A673 (cell line): ENCODE measurements at regions of chr1 and their contacts with region 1.

Region 1: DNA sequence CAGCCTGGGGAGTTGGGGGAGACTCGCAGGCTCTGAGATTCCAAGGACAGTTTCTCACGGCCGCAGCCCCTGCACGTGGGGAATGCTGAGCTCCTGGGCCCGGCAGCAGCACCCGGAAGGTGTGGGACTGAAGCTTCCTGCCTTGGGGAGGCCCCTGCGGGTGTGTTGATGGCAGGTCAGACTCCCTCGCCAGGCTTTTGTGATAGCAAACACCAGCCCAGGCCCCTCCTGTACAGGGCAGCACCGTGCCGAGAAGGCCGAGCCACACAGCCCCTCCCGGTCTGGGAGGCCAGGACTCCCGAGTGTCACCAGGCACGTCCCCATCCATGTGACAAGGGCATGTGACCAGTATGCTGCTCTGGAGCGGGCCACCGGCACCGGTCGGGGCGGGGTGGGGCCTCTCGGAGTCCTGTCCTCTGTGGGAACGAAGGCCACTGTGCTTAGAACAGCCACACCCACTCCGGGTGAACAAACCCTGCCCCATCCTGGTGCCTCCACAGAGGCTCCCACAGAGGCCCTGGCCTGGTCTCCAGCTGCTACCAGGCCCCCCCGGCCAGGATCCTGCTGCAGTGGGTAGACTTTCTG is 31.1 kb upstream of the ARHGEF16 start:
- DNase-seq: no peak
- H3K4me3 ChIP-seq: no peak overlapping the region
- H3K27ac ChIP-seq: no peak overlapping the region
- H3K4me1 ChIP-seq: no peaks in the 10 kb centered on the region
- H3K27me3 ChIP-seq: peaks cover 20% of the 10 kb centered on the region
- CTCF ChIP-seq: no peak

Region 2: GRCh38 chr1:2414083-2414958 is 1009.0 kb before region 1 on chr1:
- CTCF ChIA-PET with region 1: interaction called, 6 read pairs
- POLR2A ChIA-PET with region 1: no interaction called
- intact Hi-C with region 1: loop called (anchors 1 kb)
- DNase-seq: peak; percentile 80
- H3K4me3 ChIP-seq: no peak overlapping the region
- H3K27ac ChIP-seq: no peak overlapping the region
- H3K4me1 ChIP-seq: peaks cover 16% of the 10 kb centered on the region
- H3K27me3 ChIP-seq: peaks cover 42% of the 10 kb centered on the region
- CTCF ChIP-seq: peak; percentile 98

Region 3: GRCh38 chr1:2556277-2556677 is 867.1 kb before region 1 on chr1 and contains the start of gene TNFRSF14:
- CTCF ChIA-PET with region 1: no interaction called
- POLR2A ChIA-PET with region 1: no interaction called
- intact Hi-C with region 1: loop called (anchors 10 kb)
- DNase-seq: peak; percentile 42
- H3K4me3 ChIP-seq: peak within 1 kb of the TSS; percentile 45
- H3K27ac ChIP-seq: peak within 1 kb of the TSS; percentile 72
- H3K4me1 ChIP-seq: peaks cover 17% of the 10 kb centered on the region
- H3K27me3 ChIP-seq: no peaks in the 10 kb centered on the region
- CTCF ChIP-seq: no peak
- total RNA-seq, gene TNFRSF14: 4.6 and 7.6 TPM in 2 replicates

Region 4: DNA sequence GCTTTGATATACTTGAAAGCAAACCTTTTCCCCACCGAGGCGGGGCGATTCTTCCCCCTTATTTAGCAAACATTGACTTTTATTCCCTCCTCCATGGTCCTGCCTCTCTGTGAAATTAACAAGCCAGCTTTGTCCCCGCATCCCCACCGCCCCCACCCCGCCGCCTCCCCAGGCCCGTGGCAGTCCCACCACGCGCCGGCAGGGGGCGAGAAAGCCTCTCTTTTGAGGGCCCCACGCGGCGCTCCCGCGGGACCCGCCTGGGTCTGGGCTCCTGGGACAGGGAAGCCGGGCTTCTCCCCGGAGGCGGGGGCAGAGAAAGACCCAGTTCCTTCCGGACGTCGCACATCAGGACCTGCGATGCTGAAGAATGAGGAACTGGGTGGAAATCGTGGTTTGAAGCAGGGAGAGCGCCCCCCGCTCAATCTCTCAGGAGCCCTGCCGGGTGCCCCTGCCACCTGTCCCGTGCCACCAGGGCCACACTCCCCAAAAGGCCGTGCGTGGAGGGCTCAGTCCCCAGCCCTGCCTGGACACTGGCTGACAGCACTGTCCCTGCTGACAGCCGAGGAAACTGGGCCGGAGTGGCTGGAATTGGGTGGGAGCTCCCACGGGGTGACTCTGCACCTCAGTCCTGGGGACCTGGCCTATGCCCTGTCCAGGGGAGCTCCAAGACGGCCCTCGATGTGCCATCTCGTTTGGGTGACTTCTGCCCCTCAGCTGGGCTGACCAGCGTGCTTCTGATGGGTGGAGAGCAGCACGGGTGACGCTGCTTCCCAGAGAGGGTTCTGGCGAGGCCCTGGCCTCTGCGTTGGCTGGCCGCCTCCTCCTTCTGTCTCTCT is 410.7 kb before region 1 on chr1:
- CTCF ChIA-PET with region 1: interaction called, 5 read pairs
- POLR2A ChIA-PET with region 1: no interaction called
- intact Hi-C with region 1: loop called (anchors 2 kb)
- DNase-seq: peak; percentile 40
- H3K4me3 ChIP-seq: no peak overlapping the region
- H3K27ac ChIP-seq: no peak overlapping the region
- H3K4me1 ChIP-seq: no peaks in the 10 kb centered on the region
- H3K27me3 ChIP-seq: peaks cover 2% of the 10 kb centered on the region
- CTCF ChIP-seq: peak; percentile 66

Region 5: GRCh38 chr1:3491291-3492246 is 68.2 kb after region 1 on chr1:
- CTCF ChIA-PET with region 1: interaction called, 11 read pairs
- POLR2A ChIA-PET with region 1: no interaction called
- intact Hi-C with region 1: no loop called
- DNase-seq: peak; percentile 79
- H3K4me3 ChIP-seq: no peak overlapping the region
- H3K27ac ChIP-seq: no peak overlapping the region
- H3K4me1 ChIP-seq: no peaks in the 10 kb centered on the region
- H3K27me3 ChIP-seq: no peaks in the 10 kb centered on the region
- CTCF ChIP-seq: peak; percentile 98